Ovary (tissue), 10 donors: ENCODE measurements at regions of chr6 and their contacts with region 1.

Region 1: DNA sequence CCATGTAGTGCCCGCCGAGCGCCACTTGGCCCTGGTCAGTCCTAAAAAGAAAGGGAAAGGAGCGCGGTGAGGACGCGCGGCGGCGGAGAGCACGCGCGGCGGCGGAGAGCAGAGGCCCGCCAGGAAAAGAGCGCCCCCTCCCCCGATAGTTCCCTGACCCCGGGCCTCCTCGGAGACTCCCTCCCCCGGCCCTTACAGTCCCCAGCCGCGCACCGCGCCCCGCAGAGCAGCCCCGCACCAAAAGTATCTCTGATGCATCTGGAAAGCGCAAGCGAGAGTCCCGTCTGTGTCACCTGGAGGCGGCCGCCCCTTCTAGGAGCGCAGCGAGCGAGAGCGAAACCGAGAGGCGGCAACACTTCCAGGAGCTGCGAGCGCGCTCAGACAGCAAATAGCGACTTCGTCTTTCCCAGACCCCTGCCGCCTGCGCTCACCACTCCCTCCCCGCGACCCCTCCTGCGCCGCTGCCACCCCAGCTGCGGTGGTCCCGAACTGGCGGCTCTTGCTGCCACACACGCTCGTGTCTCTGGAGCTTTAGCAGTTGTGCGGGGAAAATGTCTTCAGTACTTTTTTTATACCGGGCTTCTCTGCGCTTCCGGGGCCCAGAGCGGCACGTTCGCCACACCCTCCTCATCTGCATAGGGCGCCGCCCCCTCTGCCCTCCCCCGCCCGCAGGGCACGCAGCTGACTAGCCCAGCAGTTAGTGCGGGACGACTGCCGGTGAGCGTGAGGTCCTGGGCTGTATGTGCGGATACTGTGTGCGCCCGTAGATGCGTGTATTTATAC is at the start of gene TENT5A:
- DNase-seq: peak; percentile 94 to 96 (median 96)
- H3K4me3 ChIP-seq: peak within 1 kb of the TSS; percentile 91
- H3K27ac ChIP-seq: peak within 1 kb of the TSS; percentile 93 to 98
- H3K4me1 ChIP-seq: peaks cover 4% of the 10 kb centered on the region
- H3K27me3 ChIP-seq: no peaks in the 10 kb centered on the region
- CTCF ChIP-seq: peak in 2 of 3 donors; percentile 11 to 19
- EP300 ChIP-seq: no peak
- POLR2A ChIP-seq: peak; percentile 85
- total RNA-seq, gene TENT5A: 19.9 to 47.1 (median 29.4) TPM

Region 2: GRCh38 chr6:80605165-80605989 is 1147.0 kb before region 1 on chr6:
- intact Hi-C with region 1: loop called in 1 of 4 experiments (anchors 5 kb)
- DNase-seq: no peak
- H3K4me3 ChIP-seq: no peak overlapping the region
- H3K27ac ChIP-seq: no peak overlapping the region
- H3K4me1 ChIP-seq: peaks cover 3% of the 10 kb centered on the region
- H3K27me3 ChIP-seq: no peaks in the 10 kb centered on the region
- CTCF ChIP-seq: peak in 2 of 3 donors; percentile 21 to 30
- EP300 ChIP-seq: no peak
- POLR2A ChIP-seq: no peak

Region 3: DNA sequence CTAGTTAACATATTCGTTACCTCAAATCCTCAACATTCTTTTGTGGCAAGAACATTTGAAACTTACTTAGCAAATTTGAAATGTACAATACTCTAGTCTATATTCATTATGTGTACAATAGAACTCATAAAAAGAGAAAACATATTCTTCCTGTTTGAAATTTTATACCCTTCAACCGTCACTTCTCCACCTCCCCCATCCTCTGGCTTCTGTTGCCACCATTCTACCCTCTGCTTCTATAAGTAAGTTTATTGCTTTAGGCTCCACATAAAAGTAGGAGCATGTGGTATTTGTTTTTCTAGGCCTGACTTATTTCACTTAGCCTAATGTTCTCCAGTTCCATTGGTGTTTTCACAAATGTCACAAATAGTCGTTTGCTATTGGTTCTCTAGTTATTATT is 205.2 kb before region 1 on chr6:
- intact Hi-C with region 1: no loop called
- DNase-seq: no peak
- H3K4me3 ChIP-seq: no peak overlapping the region
- H3K27ac ChIP-seq: no peak overlapping the region
- H3K4me1 ChIP-seq: peaks cover 1% of the 10 kb centered on the region
- H3K27me3 ChIP-seq: no peaks in the 10 kb centered on the region
- CTCF ChIP-seq: no peak
- EP300 ChIP-seq: no peak
- POLR2A ChIP-seq: no peak

Region 4: DNA sequence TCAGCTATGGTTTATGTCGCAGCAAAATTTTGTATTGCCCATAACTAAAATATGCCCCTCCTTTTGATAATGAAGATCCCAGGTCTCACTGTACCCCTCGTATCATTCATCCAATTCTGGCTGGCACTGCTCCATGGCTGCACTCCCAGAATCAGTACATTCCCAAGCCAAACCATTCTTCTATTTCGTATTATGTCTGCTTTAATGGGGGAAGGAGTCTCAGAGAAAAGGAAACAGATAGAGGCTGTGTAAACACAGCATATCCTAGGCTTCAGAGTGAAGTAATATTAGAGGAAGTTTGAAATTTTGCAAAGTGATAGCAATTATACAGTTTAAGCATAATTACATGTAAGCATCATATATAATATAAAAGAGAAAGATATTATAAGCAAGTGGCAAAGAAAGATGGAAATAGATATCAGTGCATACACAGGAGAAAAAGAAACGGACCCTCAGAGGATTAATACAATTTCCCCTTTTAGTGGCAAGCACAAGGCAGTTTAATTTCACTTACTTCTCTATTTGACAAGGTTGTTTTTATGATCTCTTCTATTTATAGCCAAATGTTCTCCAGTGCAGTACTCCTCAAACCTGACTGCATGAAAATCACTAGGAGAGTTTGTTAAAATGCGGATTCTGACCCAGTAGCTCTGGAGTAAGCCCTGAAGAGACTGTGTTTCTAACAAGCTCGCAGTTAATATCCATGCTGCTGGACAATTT is 56.7 kb after region 1 on chr6:
- intact Hi-C with region 1: loop called in 1 of 4 experiments (anchors 1 kb)
- DNase-seq: peak; percentile 21 to 70 (median 44)
- H3K4me3 ChIP-seq: no peak overlapping the region
- H3K27ac ChIP-seq: peak overlapping the region in 1 of 2 donors; percentile 40
- H3K4me1 ChIP-seq: no peaks in the 10 kb centered on the region
- H3K27me3 ChIP-seq: no peaks in the 10 kb centered on the region
- CTCF ChIP-seq: no peak
- EP300 ChIP-seq: no peak
- POLR2A ChIP-seq: no peak

Region 5: DNA sequence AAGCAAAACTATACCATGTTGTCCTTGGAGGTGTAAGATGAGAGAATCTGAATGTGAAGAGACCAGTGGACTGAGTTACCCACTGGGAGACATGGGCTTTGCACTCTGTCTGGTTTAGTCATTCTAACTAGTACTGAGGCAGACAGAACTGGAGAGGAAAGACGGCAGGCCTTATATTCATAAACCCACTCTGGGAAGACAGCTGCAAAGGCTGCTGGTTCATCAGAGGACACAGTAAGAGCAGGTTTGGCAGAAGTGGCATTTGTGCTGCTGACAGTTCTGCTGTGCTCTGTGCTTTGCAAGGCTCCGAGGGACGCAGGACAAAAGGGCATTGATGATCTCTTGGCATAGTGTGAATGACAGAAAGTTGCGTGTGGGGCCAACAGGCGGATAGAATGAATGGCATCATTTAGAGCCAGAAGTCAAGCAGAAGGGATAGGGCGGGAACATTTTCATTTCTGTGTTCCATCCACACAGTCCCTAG is 142.5 kb after region 1 on chr6:
- intact Hi-C with region 1: loop called in 1 of 4 experiments (anchors 5 kb)
- DNase-seq: peak in 2 of 5 donors; percentile 14 to 37
- H3K4me3 ChIP-seq: no peak overlapping the region
- H3K27ac ChIP-seq: peak overlapping the region in 1 of 2 donors; percentile 76
- H3K4me1 ChIP-seq: peaks cover 17% of the 10 kb centered on the region
- H3K27me3 ChIP-seq: no peaks in the 10 kb centered on the region
- CTCF ChIP-seq: no peak
- EP300 ChIP-seq: no peak
- POLR2A ChIP-seq: no peak

Region 6: GRCh38 chr6:82017288-82017687 is 265.0 kb after region 1 on chr6:
- intact Hi-C with region 1: loop called in 1 of 4 experiments (anchors 5 kb)
- DNase-seq: peak in 2 of 5 donors; percentile 38 to 76
- H3K4me3 ChIP-seq: no peak overlapping the region
- H3K27ac ChIP-seq: peak overlapping the region in 1 of 2 donors; percentile 41
- H3K4me1 ChIP-seq: peaks cover 12% of the 10 kb centered on the region
- H3K27me3 ChIP-seq: no peaks in the 10 kb centered on the region
- CTCF ChIP-seq: no peak
- EP300 ChIP-seq: peak; percentile 70
- POLR2A ChIP-seq: no peak